Right cardiac atrium (tissue), 5 donors: ENCODE measurements at regions of chr12 and their contacts with region 1.

Region 1: DNA sequence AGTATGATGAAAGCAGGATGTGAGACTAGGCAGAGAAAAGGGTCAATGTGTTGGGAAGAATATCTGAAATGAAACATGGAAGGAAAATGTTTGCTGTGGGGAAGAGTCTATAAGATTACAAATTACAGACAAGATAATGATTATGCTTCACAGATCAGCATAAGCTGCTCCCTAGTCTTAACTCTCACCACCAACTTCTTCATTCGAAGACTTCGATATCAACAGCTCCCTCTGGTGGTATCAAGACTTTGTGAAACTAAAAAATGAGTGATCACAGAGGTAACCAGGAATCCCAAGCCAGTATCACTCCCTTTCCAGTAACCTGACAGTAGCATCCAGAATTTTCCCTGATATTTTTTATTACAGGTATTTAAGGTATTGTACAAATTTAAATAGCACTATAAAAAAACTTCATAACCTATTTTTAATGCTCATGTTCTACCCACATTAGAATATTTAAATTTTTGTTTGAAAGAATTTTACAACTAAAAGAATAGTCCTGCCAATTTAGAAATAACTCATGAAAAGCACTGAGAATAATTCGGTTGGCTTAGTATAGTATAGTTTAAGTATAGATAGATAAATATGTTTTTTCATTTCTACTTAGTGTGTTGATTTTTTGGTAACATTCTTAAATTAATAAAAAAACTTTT is 84.4 kb downstream of the C2CD5 start:
- DNase-seq: no peak
- ATAC-seq: peak in 1 of 2 donors; percentile 65
- H3K4me3 ChIP-seq: no peak overlapping the region
- H3K27ac ChIP-seq: no peak overlapping the region
- H3K4me1 ChIP-seq: no peaks in the 10 kb centered on the region
- H3K27me3 ChIP-seq: no peaks in the 10 kb centered on the region

Region 2: DNA sequence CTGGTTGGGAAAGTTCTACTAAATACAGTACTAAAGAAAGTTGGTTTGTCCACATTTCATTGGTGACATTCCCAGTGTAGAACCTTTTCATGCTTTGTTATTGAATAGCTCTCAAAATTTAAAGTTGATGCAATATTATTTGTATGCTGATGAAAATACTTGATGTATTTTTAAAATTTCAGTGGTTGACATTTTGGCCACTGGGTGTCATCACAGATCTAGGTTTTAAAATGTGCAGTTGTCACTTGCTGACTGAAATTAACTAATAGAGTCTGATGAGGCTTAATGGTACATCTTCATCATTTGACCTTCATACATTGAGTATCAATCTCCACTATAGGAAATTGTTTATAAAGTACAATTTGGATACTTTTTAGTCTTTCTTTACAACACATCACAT is 376.8 kb before region 1 on chr12:
- intact Hi-C with region 1: loop called (anchors 5 kb)
- DNase-seq: no peak
- ATAC-seq: peak in 1 of 2 donors; percentile 40
- H3K4me3 ChIP-seq: no peak overlapping the region
- H3K27ac ChIP-seq: no peak overlapping the region
- H3K4me1 ChIP-seq: no peaks in the 10 kb centered on the region
- H3K27me3 ChIP-seq: no peaks in the 10 kb centered on the region

Region 3: GRCh38 chr12:22088886-22089285 is 371.1 kb before region 1 on chr12:
- intact Hi-C with region 1: loop called (anchors 5 kb)
- DNase-seq: no peak
- ATAC-seq: no peak
- H3K4me3 ChIP-seq: no peak overlapping the region
- H3K27ac ChIP-seq: no peak overlapping the region
- H3K4me1 ChIP-seq: no peaks in the 10 kb centered on the region
- H3K27me3 ChIP-seq: no peaks in the 10 kb centered on the region